ENCODE measurements at regions of chr17 and their contacts with region 1.

Region 1: DNA sequence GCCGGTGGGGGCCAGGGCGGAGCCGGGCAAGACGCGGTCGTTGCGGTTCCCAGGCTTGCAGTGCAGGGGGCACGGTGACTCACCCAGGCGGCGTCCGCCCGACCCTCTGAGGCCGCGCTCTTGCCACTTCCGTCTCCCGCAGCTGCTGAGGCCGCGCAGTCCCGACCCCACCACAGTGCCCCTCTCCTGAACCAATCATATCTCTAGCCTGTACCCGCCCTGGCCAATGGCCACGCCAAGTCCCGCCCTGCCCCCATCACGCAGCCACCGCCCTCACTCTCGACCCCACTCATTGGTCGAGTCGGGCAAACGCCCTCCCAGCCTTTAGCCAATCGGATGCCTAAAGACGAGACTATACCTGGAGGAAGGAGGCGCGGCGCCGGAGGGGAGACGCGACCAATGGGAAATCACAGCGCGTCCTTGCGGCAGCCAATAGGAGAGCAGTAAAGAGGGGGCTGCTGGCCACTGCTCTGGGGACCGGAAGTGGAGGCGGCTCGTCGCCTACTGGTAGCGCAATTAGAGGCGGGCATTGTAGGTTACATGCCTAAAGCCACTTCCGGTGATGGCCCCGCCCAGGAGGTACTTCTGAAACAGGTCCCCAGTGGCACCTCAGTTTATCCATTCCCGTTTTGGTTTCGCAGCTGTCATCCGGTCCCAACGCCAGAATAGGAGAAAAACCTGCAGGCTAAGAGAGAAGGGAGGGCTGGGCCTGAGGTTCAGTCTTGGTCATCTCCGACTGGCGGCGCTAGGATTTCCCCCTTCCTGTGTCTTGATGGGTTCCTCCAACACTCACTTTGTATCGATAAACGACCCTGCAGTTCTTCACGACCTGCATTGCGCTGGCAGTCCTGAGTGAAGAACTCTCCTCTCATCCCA is 3.5 kb upstream of the MTMR4 start:
- DNase-seq: peak; percentile 100
- H3K4me3 ChIP-seq: peak overlapping the region; percentile 75 to 100 (median 76)
- H3K4me3 Mint-ChIP-seq: peak overlapping the region; percentile 96 to 98
- H3K27ac ChIP-seq: peak overlapping the region; percentile 88 to 96
- H3K27ac Mint-ChIP-seq: peak overlapping the region; percentile 95 to 99 (median 98)
- H3K4me1 ChIP-seq: peaks cover 37 to 52% of the 10 kb centered on the region in 2 donors
- H3K4me1 Mint-ChIP-seq: peaks cover 46% of the 10 kb centered on the region
- H3K27me3 ChIP-seq: no peaks in the 10 kb centered on the region
- H3K27me3 Mint-ChIP-seq: peaks cover 0 to 8% (median 4%) of the 10 kb centered on the region in 3 donors
- CTCF ChIP-seq: no peak

Region 2: GRCh38 chr17:58006924-58007780 is 510.8 kb before region 1 on chr17 and contains the start of gene SRSF1:
- intact Hi-C with region 1: loop called in 1 of 2 experiments (anchors 5 kb)
- DNase-seq: peak; percentile 96 to 98 (median 98)
- H3K4me3 ChIP-seq: peak within 1 kb of the TSS; percentile 67 to 99 (median 82)
- H3K4me3 Mint-ChIP-seq: peak within 1 kb of the TSS; percentile 98 to 99
- H3K27ac ChIP-seq: peak within 1 kb of the TSS; percentile 92 to 97
- H3K27ac Mint-ChIP-seq: peak within 1 kb of the TSS; percentile 98 to 99 (median 99)
- H3K4me1 ChIP-seq: peaks cover 27 to 39% of the 10 kb centered on the region in 2 donors
- H3K4me1 Mint-ChIP-seq: peaks cover 38% of the 10 kb centered on the region
- H3K27me3 ChIP-seq: no peaks in the 10 kb centered on the region
- H3K27me3 Mint-ChIP-seq: peaks cover 0 to 8% (median 0%) of the 10 kb centered on the region in 3 donors
- CTCF ChIP-seq: no peak
- polyA plus RNA-seq, gene SRSF1: 51.2 to 72.1 (median 61.6) TPM

Region 3: GRCh38 chr17:58452521-58453137 is 65.3 kb before region 1 on chr17:
- intact Hi-C with region 1: no loop called
- DNase-seq: no peak
- H3K4me3 ChIP-seq: no peak overlapping the region
- H3K4me3 Mint-ChIP-seq: no peak overlapping the region
- H3K27ac ChIP-seq: no peak overlapping the region
- H3K27ac Mint-ChIP-seq: no peak overlapping the region
- H3K4me1 ChIP-seq: no peaks in the 10 kb centered on the region
- H3K4me1 Mint-ChIP-seq: no peaks in the 10 kb centered on the region
- H3K27me3 ChIP-seq: no peaks in the 10 kb centered on the region
- H3K27me3 Mint-ChIP-seq: peaks cover 2 to 19% (median 3%) of the 10 kb centered on the region in 3 donors
- CTCF ChIP-seq: no peak

Region 4: GRCh38 chr17:58577642-58578091 is 59.7 kb after region 1 on chr17:
- intact Hi-C with region 1: loop called (anchors 5 to 10 kb)
- DNase-seq: peak; percentile 34 to 50 (median 43)
- H3K4me3 ChIP-seq: no peak overlapping the region
- H3K4me3 Mint-ChIP-seq: no peak overlapping the region
- H3K27ac ChIP-seq: no peak overlapping the region
- H3K27ac Mint-ChIP-seq: no peak overlapping the region
- H3K4me1 ChIP-seq: peaks cover 4 to 8% of the 10 kb centered on the region in 2 donors
- H3K4me1 Mint-ChIP-seq: peaks cover 12% of the 10 kb centered on the region
- H3K27me3 ChIP-seq: no peaks in the 10 kb centered on the region
- H3K27me3 Mint-ChIP-seq: peaks cover under 1 to 3% (median 3%) of the 10 kb centered on the region in 3 donors
- CTCF ChIP-seq: peak; percentile 84

Region 5: GRCh38 chr17:58631523-58632323 is 113.8 kb after region 1 on chr17:
- intact Hi-C with region 1: loop called in 1 of 2 experiments (anchors 2 kb)
- DNase-seq: peak; percentile 96 to 97 (median 96)
- H3K4me3 ChIP-seq: peak overlapping the region; percentile 53 to 74 (median 74)
- H3K4me3 Mint-ChIP-seq: no peak overlapping the region
- H3K27ac ChIP-seq: peak overlapping the region; percentile 90 to 98
- H3K27ac Mint-ChIP-seq: no peak overlapping the region
- H3K4me1 ChIP-seq: peaks cover 14 to 18% of the 10 kb centered on the region in 2 donors
- H3K4me1 Mint-ChIP-seq: peaks cover 15% of the 10 kb centered on the region
- H3K27me3 ChIP-seq: no peaks in the 10 kb centered on the region
- H3K27me3 Mint-ChIP-seq: peaks cover 1 to 7% (median 2%) of the 10 kb centered on the region in 3 donors
- CTCF ChIP-seq: peak; percentile 25

Region 6: DNA sequence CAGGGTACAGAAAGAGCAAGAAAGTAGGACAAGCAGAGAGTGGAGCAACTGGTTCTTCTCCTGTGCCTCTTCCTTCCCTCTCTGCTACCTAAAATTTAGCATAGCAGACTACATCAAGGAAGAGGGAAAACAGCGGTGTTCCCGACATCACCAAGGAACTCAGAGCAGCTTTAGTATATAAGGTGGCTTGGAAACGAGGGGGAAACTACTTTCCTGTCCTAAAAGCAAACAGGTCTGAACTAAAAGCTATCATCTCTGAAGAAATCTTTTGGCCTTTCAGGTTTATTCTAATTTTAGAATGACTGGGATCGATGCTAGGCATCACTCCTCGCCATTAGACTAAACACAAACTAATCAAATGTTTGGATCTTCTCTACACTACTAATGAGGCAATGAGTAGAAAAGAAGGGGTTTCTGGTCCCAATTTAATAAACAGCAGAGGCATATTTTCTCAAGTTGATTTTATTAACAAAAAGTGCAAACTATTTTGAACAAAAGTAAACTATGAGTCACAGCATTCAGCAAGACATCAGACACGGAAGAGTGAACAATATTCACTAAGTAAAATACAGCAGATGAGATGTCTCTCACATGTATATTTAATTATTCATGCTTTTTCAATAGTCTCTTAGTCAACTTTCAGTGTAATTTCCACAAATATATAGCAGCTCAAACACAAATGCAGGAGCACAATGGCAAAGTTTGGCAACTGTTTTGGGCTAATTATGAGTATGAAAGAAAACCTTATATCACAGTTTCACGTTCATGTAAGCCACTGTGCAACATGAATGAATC is 480.0 kb after region 1 on chr17:
- intact Hi-C with region 1: loop called (anchors 2 to 5 kb)
- DNase-seq: peak in 2 of 3 donors; percentile 16 to 29
- H3K4me3 ChIP-seq: peak overlapping the region in 2 of 3 experiments; percentile 19 to 64
- H3K4me3 Mint-ChIP-seq: peak overlapping the region in 1 of 2 donors; percentile 55
- H3K27ac ChIP-seq: peak overlapping the region; percentile 24 to 89
- H3K27ac Mint-ChIP-seq: peak overlapping the region; percentile 91 to 96 (median 95)
- H3K4me1 ChIP-seq: peaks cover 75 to 80% of the 10 kb centered on the region in 2 donors
- H3K4me1 Mint-ChIP-seq: peaks cover 68% of the 10 kb centered on the region
- H3K27me3 ChIP-seq: no peaks in the 10 kb centered on the region
- H3K27me3 Mint-ChIP-seq: peaks cover 0 to 2% (median 2%) of the 10 kb centered on the region in 3 donors
- CTCF ChIP-seq: no peak